A549 (cell line): ENCODE measurements at regions of chr17 and their contacts with region 1.

Region 1: GRCh38 chr17:63911657-63912426 is 784 bp upstream of the CSHL1 start:
- DNase-seq: peak; percentile 41 to 63
- ATAC-seq: peak; percentile 63 to 84; a peak in 3 of 6 replicates
- H3K4me3 ChIP-seq: no peak overlapping the region
- H3K27ac ChIP-seq: no peak overlapping the region
- H3K4me1 ChIP-seq: no peaks in the 10 kb centered on the region
- CTCF ChIP-seq: peak; percentile 90
- EP300 ChIP-seq: no peak
- POLR2A ChIP-seq: no peak
- RAD21 ChIP-seq: peak; percentile 59 to 80

Region 2: DNA sequence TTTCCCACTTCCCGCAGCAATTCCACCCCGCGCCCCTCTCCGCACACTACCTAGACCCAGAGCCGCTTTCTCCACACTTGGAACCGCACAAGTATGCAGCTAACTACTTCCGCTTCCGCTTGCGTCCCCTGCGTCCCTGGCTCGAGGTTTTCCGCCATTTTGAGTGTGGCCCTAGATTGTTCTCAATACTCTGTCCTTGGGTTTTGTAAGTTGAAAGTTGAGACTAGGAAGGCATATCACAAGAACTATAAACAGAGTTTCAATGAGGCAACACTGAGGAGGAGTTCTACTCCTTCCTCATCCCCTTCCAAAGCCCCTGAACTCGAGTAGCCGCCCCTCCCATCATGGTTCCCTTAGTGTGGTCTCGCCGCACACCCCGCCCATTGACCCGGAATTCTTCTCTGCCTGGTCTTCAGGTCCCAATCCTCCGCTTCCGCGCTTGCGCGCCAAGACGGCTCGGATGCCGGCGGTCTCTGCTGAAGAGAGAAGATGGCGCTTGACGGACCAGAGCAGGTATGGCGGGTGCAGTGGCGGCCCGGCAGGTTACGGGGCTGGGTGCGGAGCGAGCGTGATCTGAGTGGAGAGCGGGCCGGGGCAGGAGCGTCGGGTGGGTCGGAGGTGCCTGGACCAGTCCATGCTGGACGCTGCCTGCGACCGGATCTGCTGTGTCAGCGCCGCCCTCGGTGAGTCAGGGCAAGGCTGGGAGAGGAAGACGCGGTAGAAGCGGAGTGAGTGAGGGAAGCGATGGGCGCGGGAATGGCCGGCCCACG is 84.7 kb before region 1 on chr17 and contains the starts of genes FTSJ3 and PSMC5:
- CTCF ChIA-PET with region 1: no interaction called
- POLR2A ChIA-PET with region 1: no interaction called
- DNase-seq: peak; percentile 97
- ATAC-seq: peak; percentile 89 to 93
- H3K4me3 ChIP-seq: peak within 1 kb of the TSS; percentile 74
- H3K27ac ChIP-seq: peak within 1 kb of the TSS; percentile 94 to 96
- H3K4me1 ChIP-seq: peaks cover 22% of the 10 kb centered on the region
- CTCF ChIP-seq: peak; percentile 49
- EP300 ChIP-seq: no peak
- POLR2A ChIP-seq: peak; percentile 94
- RAD21 ChIP-seq: no peak
- polyA plus RNA-seq, gene FTSJ3: 62.6 and 74.5 TPM in 2 replicates
- polyA plus RNA-seq, gene PSMC5: 222 and 303 TPM in 2 replicates

Region 3: GRCh38 chr17:63859257-63859656 is 52.6 kb before region 1 on chr17:
- CTCF ChIA-PET with region 1: interaction called, 10 read pairs
- POLR2A ChIA-PET with region 1: interaction called, 3 read pairs
- DNase-seq: no peak
- ATAC-seq: no peak
- H3K4me3 ChIP-seq: no peak overlapping the region
- H3K27ac ChIP-seq: no peak overlapping the region
- H3K4me1 ChIP-seq: no peaks in the 10 kb centered on the region
- CTCF ChIP-seq: no peak
- EP300 ChIP-seq: no peak
- POLR2A ChIP-seq: no peak
- RAD21 ChIP-seq: no peak

Region 4: DNA sequence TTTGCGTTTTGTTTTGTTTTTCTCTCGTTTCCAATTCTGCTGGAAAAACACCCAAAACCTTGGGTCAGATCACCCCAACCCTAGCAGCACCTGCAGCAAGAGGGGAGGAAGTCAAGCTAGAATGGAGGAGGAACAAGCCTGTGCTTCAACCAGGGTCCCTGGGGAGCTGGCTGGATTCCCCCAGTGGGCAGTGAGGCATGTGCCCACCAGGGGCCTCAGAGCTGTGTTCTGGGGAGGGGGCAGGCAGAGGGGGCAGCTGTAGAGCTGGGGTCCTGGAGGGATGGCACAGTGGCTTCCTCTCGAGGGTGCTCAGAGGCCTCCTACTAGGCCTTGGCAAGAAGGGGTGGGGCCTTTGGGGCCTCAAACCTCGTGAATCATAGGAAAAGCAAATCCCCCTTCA is 13.8 kb after region 1 on chr17:
- CTCF ChIA-PET with region 1: interaction called, 132 read pairs
- POLR2A ChIA-PET with region 1: no interaction called
- DNase-seq: no peak
- ATAC-seq: no peak
- H3K4me3 ChIP-seq: no peak overlapping the region
- H3K27ac ChIP-seq: no peak overlapping the region
- H3K4me1 ChIP-seq: no peaks in the 10 kb centered on the region
- CTCF ChIP-seq: no peak
- EP300 ChIP-seq: no peak
- POLR2A ChIP-seq: no peak
- RAD21 ChIP-seq: no peak

Region 5: GRCh38 chr17:63931099-63931561 is 19.3 kb after region 1 on chr17:
- CTCF ChIA-PET with region 1: interaction called, 132 read pairs
- POLR2A ChIA-PET with region 1: no interaction called
- DNase-seq: no peak
- ATAC-seq: peak in 1 of 2 experiments; percentile 41; a peak in 3 of 6 replicates
- H3K4me3 ChIP-seq: no peak overlapping the region
- H3K27ac ChIP-seq: no peak overlapping the region
- H3K4me1 ChIP-seq: no peaks in the 10 kb centered on the region
- CTCF ChIP-seq: no peak
- EP300 ChIP-seq: no peak
- POLR2A ChIP-seq: no peak
- RAD21 ChIP-seq: no peak

Region 6: DNA sequence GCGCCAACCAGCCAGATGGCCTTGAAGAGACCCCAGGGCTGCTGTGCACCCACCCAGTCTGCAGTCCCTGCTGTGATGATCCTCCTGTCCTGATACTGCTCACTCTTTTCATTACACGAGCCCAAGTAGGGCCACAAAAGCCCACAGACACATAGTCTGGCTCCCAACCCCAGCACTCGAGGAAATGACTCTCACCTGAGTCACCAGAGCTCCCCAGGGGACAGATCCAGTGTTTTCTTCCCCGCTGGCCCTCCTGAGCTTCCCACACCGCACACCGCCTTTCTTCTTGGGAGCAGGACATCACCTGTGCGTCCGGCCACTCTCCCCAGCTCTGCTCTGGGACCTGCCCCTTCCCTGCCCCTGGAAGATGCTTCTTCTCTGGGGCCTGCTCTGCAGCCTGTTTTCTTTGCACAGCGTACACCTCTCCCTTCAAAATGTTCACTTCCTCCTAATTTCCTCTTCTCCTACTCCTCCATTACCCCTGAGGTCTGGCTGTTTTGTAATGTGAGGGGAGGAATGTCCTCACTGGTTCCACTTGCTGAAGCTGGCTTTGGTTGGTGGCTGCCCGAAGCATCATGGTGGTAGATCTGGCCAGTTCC is 62.9 kb after region 1 on chr17:
- CTCF ChIA-PET with region 1: interaction called, 11 read pairs
- POLR2A ChIA-PET with region 1: no interaction called
- DNase-seq: peak in 1 of 2 experiments; percentile 63
- ATAC-seq: peak; percentile 61 to 74
- H3K4me3 ChIP-seq: no peak overlapping the region
- H3K27ac ChIP-seq: peak overlapping the region; percentile 49 to 68; a peak in 5 of 6 replicates
- H3K4me1 ChIP-seq: peaks cover 19% of the 10 kb centered on the region
- CTCF ChIP-seq: no peak
- EP300 ChIP-seq: no peak
- POLR2A ChIP-seq: no peak
- RAD21 ChIP-seq: no peak

Region 7: GRCh38 chr17:63998050-63998720 is 86.3 kb after region 1 on chr17 and contains the start of gene PRR29:
- CTCF ChIA-PET with region 1: interaction called, 15 read pairs
- POLR2A ChIA-PET with region 1: no interaction called
- DNase-seq: peak; percentile 71 to 95
- ATAC-seq: peak; percentile 75 to 90
- H3K4me3 ChIP-seq: peak within 1 kb of the TSS; percentile 63
- H3K27ac ChIP-seq: peak within 1 kb of the TSS; percentile 52 to 81
- H3K4me1 ChIP-seq: peaks cover 9% of the 10 kb centered on the region
- CTCF ChIP-seq: no peak
- EP300 ChIP-seq: no peak
- POLR2A ChIP-seq: no peak
- RAD21 ChIP-seq: no peak
- polyA plus RNA-seq, gene PRR29: 0.22 and 0.44 TPM in 2 replicates